ENCODE measurements at regions of chr3 and their contacts with region 1.

Region 1: GRCh38 chr3:59456852-59457485 is 407.1 kb upstream of the CFAP20DC start:
- DNase-seq: no peak
- H3K4me3 Mint-ChIP-seq: no peak overlapping the region
- H3K27ac Mint-ChIP-seq: no peak overlapping the region
- H3K4me1 Mint-ChIP-seq: peaks cover 36% of the 10 kb centered on the region
- H3K27me3 Mint-ChIP-seq: no peaks in the 10 kb centered on the region

Region 2: DNA sequence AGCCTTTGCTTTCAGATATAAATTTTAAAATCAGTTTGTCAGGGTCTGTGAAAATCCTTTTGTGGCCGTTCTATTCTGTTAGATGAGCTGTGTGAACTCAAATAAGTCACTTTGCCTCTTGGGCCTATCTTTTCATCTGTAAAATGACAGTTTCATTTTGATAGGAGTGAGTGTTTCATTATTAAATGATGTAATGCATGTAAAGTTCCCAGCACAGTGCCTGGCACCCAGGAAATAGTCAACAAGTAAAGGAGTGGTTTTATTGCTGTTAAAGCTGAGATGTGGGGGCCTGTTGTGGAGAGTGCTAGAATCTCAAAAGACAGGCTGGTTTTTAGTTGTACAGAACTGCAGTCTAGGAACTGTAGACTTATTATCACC is 12.7 kb before region 1 on chr3:
- CTCF ChIA-PET with region 1: interaction called, 11 read pairs
- POLR2A ChIA-PET with region 1: interaction called, 4 read pairs
- DNase-seq: peak; percentile 27
- H3K4me3 Mint-ChIP-seq: peak overlapping the region; percentile 57
- H3K27ac Mint-ChIP-seq: peak overlapping the region; percentile 94
- H3K4me1 Mint-ChIP-seq: peaks cover 60% of the 10 kb centered on the region
- H3K27me3 Mint-ChIP-seq: no peaks in the 10 kb centered on the region

Region 3: DNA sequence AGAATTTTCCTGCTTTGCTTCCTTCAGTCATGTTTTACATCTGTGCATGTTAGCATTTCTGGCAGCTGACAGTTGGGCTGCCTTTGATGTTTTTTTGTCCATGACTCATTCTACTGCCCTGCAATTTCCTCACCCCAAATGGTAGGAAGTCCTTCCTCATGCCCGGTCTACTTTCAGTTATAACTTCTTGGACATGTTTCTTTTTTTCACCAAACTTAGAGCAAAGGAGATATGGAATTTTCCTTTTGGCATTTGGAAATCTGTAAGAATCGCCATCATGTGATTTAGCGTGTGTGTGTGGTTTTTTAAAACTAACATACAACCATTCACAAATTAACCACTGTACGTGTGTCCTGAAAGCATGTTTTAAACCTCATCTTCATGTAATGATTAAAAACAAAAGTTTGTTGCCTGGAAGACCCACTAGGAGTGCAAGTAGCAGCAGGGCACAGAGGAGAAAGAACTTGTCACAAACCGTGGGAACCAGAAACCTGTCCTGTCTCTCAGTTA is 23.6 kb after region 1 on chr3:
- CTCF ChIA-PET with region 1: no interaction called
- POLR2A ChIA-PET with region 1: no interaction called
- DNase-seq: peak; percentile 21
- H3K4me3 Mint-ChIP-seq: peak overlapping the region; percentile 6
- H3K27ac Mint-ChIP-seq: peak overlapping the region; percentile 64
- H3K4me1 Mint-ChIP-seq: peaks cover 19% of the 10 kb centered on the region
- H3K27me3 Mint-ChIP-seq: no peaks in the 10 kb centered on the region

Measured in activated CD4-positive, alpha-beta T cell treated with anti-CD3 and anti-CD28 coated beads, Interleukin-2, amount 10 ng/mL, durations not matched to agents 7 days and 5 days (primary cell).